ENCODE measurements at regions of chr19 and their contacts with region 1.

Region 1: DNA sequence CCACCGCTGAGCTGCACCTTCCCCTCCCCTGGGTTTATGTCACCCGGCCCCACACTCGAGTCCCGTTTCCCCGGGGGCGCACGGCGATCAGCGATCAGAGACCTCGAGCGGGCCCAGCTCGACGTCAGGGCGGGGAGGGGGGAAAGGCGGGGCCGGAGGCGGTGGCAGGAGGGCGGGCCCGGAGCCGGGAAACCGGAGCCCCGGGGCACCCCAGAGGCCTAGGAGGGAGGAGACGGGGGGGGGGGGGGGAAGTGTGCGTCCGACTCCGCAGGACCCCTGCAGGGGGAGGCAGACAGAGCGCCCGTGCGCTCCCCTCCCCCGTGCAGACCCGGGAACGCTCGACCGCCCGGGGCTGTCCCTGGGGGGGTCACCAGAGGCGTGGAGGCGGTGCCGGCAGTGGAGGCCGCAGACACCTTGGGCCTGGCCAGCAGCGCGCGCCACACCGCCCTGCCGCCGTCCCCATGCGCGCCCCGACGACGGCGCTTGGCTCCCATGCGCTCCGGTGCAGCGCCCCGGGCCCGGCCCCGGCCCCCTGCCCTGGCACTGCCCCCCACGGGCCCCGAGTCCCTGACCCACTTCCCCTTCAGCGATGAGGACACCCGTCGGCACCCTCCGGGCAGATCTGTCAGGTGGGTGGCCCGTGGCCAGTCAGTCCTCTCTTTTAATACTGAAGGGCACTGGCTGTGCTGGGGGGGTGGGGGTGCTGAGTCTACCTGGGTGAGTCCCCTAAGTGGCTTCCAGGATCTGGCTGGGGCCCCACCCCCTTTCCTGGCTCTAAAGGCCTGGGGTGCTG is 11.8 kb downstream of the PDE4A start:
- DNase-seq: no peak
- H3K4me3 Mint-ChIP-seq: peak overlapping the region; percentile 40
- H3K27ac Mint-ChIP-seq: no peak overlapping the region
- H3K4me1 Mint-ChIP-seq: peaks cover 5% of the 10 kb centered on the region
- H3K27me3 Mint-ChIP-seq: peaks cover 34% of the 10 kb centered on the region
- CTCF ChIP-seq: no peak

Region 2: GRCh38 chr19:10269333-10270179 is 162.6 kb before region 1 on chr19:
- CTCF ChIA-PET with region 1: no interaction called
- POLR2A ChIA-PET with region 1: no interaction called
- intact Hi-C with region 1: no loop called
- DNase-seq: peak; percentile 78
- H3K4me3 Mint-ChIP-seq: peak overlapping the region; percentile 54
- H3K27ac Mint-ChIP-seq: peak overlapping the region; percentile 16
- H3K4me1 Mint-ChIP-seq: no peaks in the 10 kb centered on the region
- H3K27me3 Mint-ChIP-seq: no peaks in the 10 kb centered on the region
- CTCF ChIP-seq: peak; percentile 95

Region 3: DNA sequence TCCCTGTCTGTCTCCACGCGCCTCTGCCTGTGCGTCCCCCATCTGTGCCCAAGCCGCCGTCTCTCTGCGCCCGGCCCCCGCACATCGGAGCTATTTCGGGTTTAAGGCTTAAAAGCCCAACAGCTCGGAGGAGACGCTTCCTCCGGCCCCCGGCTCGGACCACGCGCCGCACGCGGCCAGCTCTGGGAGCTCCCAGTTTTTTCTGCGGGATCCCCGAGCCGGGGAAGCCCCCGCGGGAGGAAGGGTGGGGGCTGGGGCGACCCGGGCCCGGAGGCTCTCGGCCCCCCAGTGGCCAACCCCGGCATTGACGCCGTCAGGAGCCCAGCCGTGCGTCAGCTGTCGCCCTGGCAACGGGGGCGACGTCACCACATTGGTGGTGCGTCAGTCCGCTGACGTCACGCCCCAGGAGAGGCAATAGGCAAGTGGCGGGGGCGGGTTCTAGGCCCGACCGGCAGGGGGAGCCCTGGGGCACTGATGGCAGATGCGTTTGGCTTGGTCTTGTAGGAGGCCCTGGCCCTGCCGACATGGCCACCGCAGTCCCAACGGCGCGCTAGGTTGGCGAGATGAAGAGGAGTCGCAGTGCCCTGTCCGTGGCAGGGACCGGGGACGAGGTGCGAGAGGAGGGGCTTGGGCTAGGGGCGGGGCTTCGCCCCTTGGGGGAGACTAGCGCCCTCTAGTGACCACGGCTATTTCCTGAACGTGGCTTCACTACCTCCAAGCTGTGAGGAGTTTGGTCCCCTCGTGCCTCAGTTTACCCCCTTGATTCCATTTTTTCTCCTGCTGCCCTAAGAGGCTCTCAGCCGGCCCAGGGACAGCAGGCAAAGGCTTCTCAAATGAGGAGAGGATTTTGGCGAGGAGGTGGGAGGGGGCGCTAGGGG is 15.5 kb before region 1 on chr19:
- CTCF ChIA-PET with region 1: interaction called, 21 read pairs
- POLR2A ChIA-PET with region 1: no interaction called
- intact Hi-C with region 1: no loop called
- DNase-seq: peak; percentile 54
- H3K4me3 Mint-ChIP-seq: peak overlapping the region; percentile 55
- H3K27ac Mint-ChIP-seq: no peak overlapping the region
- H3K4me1 Mint-ChIP-seq: peaks cover 25% of the 10 kb centered on the region
- H3K27me3 Mint-ChIP-seq: peaks cover 33% of the 10 kb centered on the region
- CTCF ChIP-seq: peak; percentile 80

Measured in MCF 10A (cell line).